ENCODE measurements at regions of chr10 and their contacts with region 1.

Region 1: GRCh38 chr10:110610308-110610774 is 33.8 kb upstream of the RBM20 start:
- DNase-seq: peak in 1 of 2 experiments; percentile 51
- H3K4me3 ChIP-seq: no peak overlapping the region
- H3K27ac ChIP-seq: no peak overlapping the region
- H3K4me1 ChIP-seq: peaks cover 5 to 9% (median 8%) of the 10 kb centered on the region in 4 experiments
- H3K27me3 ChIP-seq: no peaks in the 10 kb centered on the region
- CTCF ChIP-seq: peak; percentile 17 to 87 (median 78)
- EP300 ChIP-seq: no peak
- POLR2A ChIP-seq: no peak
- RAD21 ChIP-seq: peak; percentile 95 to 98

Region 2: GRCh38 chr10:110535958-110536891 is 74.1 kb before region 1 on chr10:
- CTCF ChIA-PET with region 1: no interaction called
- POLR2A ChIA-PET with region 1: no interaction called
- DNase-seq: no peak
- H3K4me3 ChIP-seq: no peak overlapping the region
- H3K27ac ChIP-seq: no peak overlapping the region
- H3K4me1 ChIP-seq: peaks cover 0 to 3% (median 0%) of the 10 kb centered on the region in 4 experiments; a peak in 2 of 7 replicates
- H3K27me3 ChIP-seq: no peaks in the 10 kb centered on the region
- CTCF ChIP-seq: peak; percentile 36 to 55 (median 47)
- EP300 ChIP-seq: no peak
- POLR2A ChIP-seq: no peak
- RAD21 ChIP-seq: peak; percentile 80

Region 3: GRCh38 chr10:110574420-110574819 is 35.9 kb before region 1 on chr10:
- CTCF ChIA-PET with region 1: no interaction called
- POLR2A ChIA-PET with region 1: no interaction called
- DNase-seq: no peak
- H3K4me3 ChIP-seq: no peak overlapping the region
- H3K27ac ChIP-seq: no peak overlapping the region
- H3K4me1 ChIP-seq: peaks cover 0 to 4% (median 0%) of the 10 kb centered on the region in 4 experiments; a peak in 1 of 7 replicates
- H3K27me3 ChIP-seq: no peaks in the 10 kb centered on the region
- CTCF ChIP-seq: no peak
- EP300 ChIP-seq: no peak
- POLR2A ChIP-seq: no peak
- RAD21 ChIP-seq: no peak

Region 4: GRCh38 chr10:110634527-110635209 is 24.3 kb after region 1 on chr10:
- CTCF ChIA-PET with region 1: interaction called, 21 read pairs
- POLR2A ChIA-PET with region 1: interaction called, 3 read pairs
- DNase-seq: no peak
- H3K4me3 ChIP-seq: no peak overlapping the region
- H3K27ac ChIP-seq: no peak overlapping the region
- H3K4me1 ChIP-seq: peaks cover 7 to 15% (median 10%) of the 10 kb centered on the region in 4 experiments
- H3K27me3 ChIP-seq: no peaks in the 10 kb centered on the region
- CTCF ChIP-seq: no peak
- EP300 ChIP-seq: no peak
- POLR2A ChIP-seq: no peak
- RAD21 ChIP-seq: no peak

Region 5: GRCh38 chr10:110641256-110641655 is 30.9 kb after region 1 on chr10:
- CTCF ChIA-PET with region 1: interaction called, 21 read pairs
- POLR2A ChIA-PET with region 1: interaction called, 4 read pairs
- DNase-seq: no peak
- H3K4me3 ChIP-seq: peak overlapping the region in 1 of 4 experiments; percentile 30; a peak in 2 of 8 replicates
- H3K27ac ChIP-seq: no peak overlapping the region
- H3K4me1 ChIP-seq: peaks cover 12 to 30% (median 15%) of the 10 kb centered on the region in 4 experiments
- H3K27me3 ChIP-seq: peaks cover 30 to 44% (median 38%) of the 10 kb centered on the region in 4 experiments
- CTCF ChIP-seq: no peak
- EP300 ChIP-seq: no peak
- POLR2A ChIP-seq: no peak
- RAD21 ChIP-seq: no peak

Region 6: DNA sequence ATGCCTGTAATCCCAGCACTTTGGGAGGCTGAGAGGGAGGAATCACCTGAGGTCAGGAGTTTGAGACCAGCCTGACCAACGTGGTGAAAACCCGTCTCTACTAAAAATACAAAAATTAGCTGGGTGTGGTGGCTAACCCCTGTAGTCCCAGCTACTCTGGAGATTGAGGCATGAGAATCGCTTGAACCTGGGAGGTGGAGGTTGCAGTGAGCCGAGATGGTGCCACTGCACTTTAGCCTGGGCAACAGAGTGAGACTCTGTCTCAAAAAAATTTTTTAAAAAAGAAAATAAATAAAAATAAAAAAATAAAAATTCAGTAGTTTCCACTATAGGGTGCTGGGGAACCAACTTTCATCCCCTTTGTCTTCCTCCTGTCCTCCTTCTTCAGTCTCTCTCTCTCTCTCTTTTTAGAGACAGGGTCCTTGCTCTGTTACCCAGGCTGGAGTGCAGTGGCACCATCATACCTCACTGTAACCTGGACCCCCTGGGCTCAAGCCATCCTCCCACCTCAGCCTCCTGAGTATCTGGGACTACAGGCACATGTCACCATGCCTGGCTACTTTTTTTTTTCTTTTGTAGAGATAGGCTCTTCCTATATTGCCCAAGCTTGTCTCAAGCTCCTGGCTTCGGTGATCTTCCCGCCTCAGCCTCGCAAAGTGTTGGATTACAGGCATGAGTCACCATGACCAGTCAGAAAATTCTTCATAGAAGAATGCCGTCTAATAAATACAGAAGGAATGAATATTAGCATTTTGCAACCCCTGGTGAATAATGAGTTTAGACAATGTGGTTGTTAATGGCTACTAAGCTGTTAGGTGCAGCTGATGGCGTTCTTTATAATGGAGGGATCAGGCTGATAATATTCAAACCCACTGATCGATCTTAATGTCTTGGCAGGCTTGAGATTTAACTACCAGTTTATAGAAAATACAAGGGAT is 54.4 kb after region 1 on chr10:
- CTCF ChIA-PET with region 1: interaction called, 237 read pairs
- POLR2A ChIA-PET with region 1: no interaction called
- DNase-seq: no peak
- H3K4me3 ChIP-seq: no peak overlapping the region
- H3K27ac ChIP-seq: no peak overlapping the region
- H3K4me1 ChIP-seq: peaks cover 7 to 22% (median 14%) of the 10 kb centered on the region in 4 experiments; a peak in 6 of 7 replicates
- H3K27me3 ChIP-seq: peaks cover 3 to 30% (median 21%) of the 10 kb centered on the region in 4 experiments
- CTCF ChIP-seq: no peak
- EP300 ChIP-seq: no peak
- POLR2A ChIP-seq: no peak
- RAD21 ChIP-seq: no peak

Region 7: GRCh38 chr10:110671788-110672579 is 61.6 kb after region 1 on chr10:
- CTCF ChIA-PET with region 1: interaction called, 237 read pairs
- POLR2A ChIA-PET with region 1: interaction called, 4 read pairs
- DNase-seq: peak in 1 of 2 experiments; percentile 83
- H3K4me3 ChIP-seq: peak overlapping the region; percentile 27 to 70 (median 52)
- H3K27ac ChIP-seq: no peak overlapping the region
- H3K4me1 ChIP-seq: peaks cover 7 to 20% (median 13%) of the 10 kb centered on the region in 4 experiments; a peak in 6 of 7 replicates
- H3K27me3 ChIP-seq: peaks cover 5 to 58% (median 40%) of the 10 kb centered on the region in 4 experiments
- CTCF ChIP-seq: peak; percentile 77 to 95 (median 80)
- EP300 ChIP-seq: no peak
- POLR2A ChIP-seq: no peak
- RAD21 ChIP-seq: peak; percentile 72 to 82

Region 8: GRCh38 chr10:110681023-110681681 is 70.8 kb after region 1 on chr10:
- CTCF ChIA-PET with region 1: interaction called, 237 read pairs
- POLR2A ChIA-PET with region 1: interaction called, 4 read pairs
- DNase-seq: peak in 1 of 2 experiments; percentile 69
- H3K4me3 ChIP-seq: no peak overlapping the region
- H3K27ac ChIP-seq: no peak overlapping the region
- H3K4me1 ChIP-seq: peaks cover 2 to 10% (median 6%) of the 10 kb centered on the region in 4 experiments; a peak in 5 of 7 replicates
- H3K27me3 ChIP-seq: no peaks in the 10 kb centered on the region
- CTCF ChIP-seq: peak; percentile 69 to 87 (median 86)
- EP300 ChIP-seq: no peak
- POLR2A ChIP-seq: no peak
- RAD21 ChIP-seq: peak; percentile 66 to 69

Measured in H1 (cell line).